CD8-positive, alpha-beta memory T cell (primary cell): ENCODE measurements at regions of chr13 and their contacts with region 1.

Region 1: DNA sequence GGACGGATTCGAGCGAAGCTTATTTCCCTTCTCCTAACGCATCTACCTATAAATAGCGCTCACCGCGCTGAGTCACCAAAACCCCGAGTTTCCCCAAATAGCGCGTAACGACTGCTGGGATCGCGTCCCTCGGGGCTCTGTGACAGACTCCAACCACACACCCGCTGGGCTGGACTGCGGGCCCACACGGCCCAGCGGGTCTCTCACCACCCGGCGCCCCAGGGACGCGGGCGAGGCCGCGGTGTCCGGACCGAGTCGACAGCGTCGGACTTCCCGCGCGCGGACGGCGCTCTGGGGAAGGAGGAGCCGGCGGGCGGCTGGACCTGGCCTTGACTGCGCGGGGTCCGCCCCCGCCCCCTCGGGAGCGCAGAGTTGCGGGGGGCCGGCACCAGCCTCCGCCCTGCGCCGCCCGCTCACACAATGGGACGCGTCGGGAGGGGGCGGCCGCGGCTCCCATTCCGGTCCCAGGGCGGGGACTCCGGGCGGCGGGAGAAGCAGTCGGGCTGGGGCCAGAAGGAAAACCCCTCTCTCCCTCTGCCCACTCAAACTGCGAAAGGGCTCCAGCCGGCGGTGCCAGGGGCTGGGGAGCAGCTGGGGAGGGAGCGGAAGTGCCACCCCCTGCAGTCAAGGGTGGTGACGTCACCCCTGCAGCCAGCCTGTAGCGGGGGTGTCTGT is 108.8 kb downstream of the KCNRG start:
- DNase-seq: peak; percentile 62 to 85 (median 75)
- H3K4me3 ChIP-seq: peak overlapping the region; percentile 77
- H3K4me3 Mint-ChIP-seq: peak overlapping the region; percentile 89 to 94 (median 92)
- H3K27ac ChIP-seq: peak overlapping the region; percentile 95
- H3K27ac Mint-ChIP-seq: peak overlapping the region; percentile 95 to 99 (median 98)
- H3K4me1 ChIP-seq: peaks cover 46% of the 10 kb centered on the region
- H3K4me1 Mint-ChIP-seq: peaks cover 48 to 70% (median 65%) of the 10 kb centered on the region in 3 donors
- H3K27me3 ChIP-seq: peaks cover 7% of the 10 kb centered on the region
- H3K27me3 Mint-ChIP-seq: peaks cover 16 to 20% of the 10 kb centered on the region in 2 donors

Region 2: DNA sequence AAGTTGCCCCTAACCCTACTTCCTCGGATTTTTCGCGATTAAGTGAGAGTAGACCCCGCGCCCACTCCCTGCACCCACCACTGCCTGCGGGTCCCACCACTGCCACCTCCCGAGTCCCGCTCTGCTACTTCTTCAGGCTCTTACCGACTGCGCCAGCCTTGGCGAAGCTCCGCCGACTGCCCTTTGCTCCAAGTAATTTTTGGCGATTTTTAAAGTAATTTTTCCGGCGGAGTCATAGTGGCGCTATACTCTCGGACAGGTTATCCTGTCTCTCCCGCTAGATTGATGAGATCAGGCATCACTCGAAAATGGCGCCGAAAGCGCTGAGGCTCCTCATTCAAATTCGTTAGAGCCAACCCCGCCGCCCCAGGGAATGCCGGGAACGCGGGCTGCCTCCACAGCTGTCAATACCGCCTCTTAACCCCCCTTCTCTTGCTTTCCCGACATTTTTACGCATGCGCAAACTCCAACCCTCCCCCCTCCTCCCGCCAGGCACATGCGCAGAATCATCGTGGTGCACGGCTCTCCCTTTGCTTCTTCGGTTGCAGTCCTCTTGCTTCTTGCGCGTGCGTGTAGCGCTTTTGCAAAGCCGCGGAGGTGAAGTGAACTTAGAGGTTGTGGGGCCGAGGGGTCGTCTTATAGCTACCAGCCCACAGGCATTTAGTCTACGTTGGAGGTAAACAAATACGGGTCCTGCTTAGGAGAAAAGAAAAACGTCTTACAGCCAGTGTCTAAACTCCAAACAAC is 42.1 kb before region 1 on chr13:
- CTCF ChIA-PET with region 1: interaction called, 133 read pairs
- POLR2A ChIA-PET with region 1: interaction called, 139 read pairs
- DNase-seq: peak; percentile 97 to 99 (median 98)
- H3K4me3 ChIP-seq: peak overlapping the region; percentile 97
- H3K4me3 Mint-ChIP-seq: peak overlapping the region; percentile 93 to 100 (median 97)
- H3K27ac ChIP-seq: peak overlapping the region; percentile 78
- H3K27ac Mint-ChIP-seq: peak overlapping the region; percentile 82 to 98 (median 96)
- H3K4me1 ChIP-seq: peaks cover 21% of the 10 kb centered on the region
- H3K4me1 Mint-ChIP-seq: peaks cover 53 to 66% (median 59%) of the 10 kb centered on the region in 3 donors
- H3K27me3 ChIP-seq: no peaks in the 10 kb centered on the region
- H3K27me3 Mint-ChIP-seq: peaks cover 4 to 8% of the 10 kb centered on the region in 2 donors

Region 3: GRCh38 chr13:50236898-50237318 is 112.9 kb after region 1 on chr13:
- CTCF ChIA-PET with region 1: interaction called, 6 read pairs
- POLR2A ChIA-PET with region 1: interaction called, 12 read pairs
- DNase-seq: peak in 3 of 5 donors; percentile 4 to 51 (median 43)
- H3K4me3 ChIP-seq: peak overlapping the region; percentile 33
- H3K4me3 Mint-ChIP-seq: peak overlapping the region; percentile 59 to 91 (median 87)
- H3K27ac ChIP-seq: peak overlapping the region; percentile 39
- H3K27ac Mint-ChIP-seq: peak overlapping the region; percentile 45 to 95 (median 89)
- H3K4me1 ChIP-seq: peaks cover 14% of the 10 kb centered on the region
- H3K4me1 Mint-ChIP-seq: peaks cover 35 to 51% (median 45%) of the 10 kb centered on the region in 3 donors
- H3K27me3 ChIP-seq: no peaks in the 10 kb centered on the region
- H3K27me3 Mint-ChIP-seq: no peaks in the 10 kb centered on the region

Region 4: GRCh38 chr13:50299546-50300249 is 175.7 kb after region 1 on chr13:
- CTCF ChIA-PET with region 1: no interaction called
- POLR2A ChIA-PET with region 1: no interaction called
- DNase-seq: no peak
- H3K4me3 ChIP-seq: no peak overlapping the region
- H3K4me3 Mint-ChIP-seq: no peak overlapping the region
- H3K27ac ChIP-seq: no peak overlapping the region
- H3K27ac Mint-ChIP-seq: no peak overlapping the region
- H3K4me1 ChIP-seq: no peaks in the 10 kb centered on the region
- H3K4me1 Mint-ChIP-seq: peaks cover 32 to 46% (median 37%) of the 10 kb centered on the region in 3 donors
- H3K27me3 ChIP-seq: no peaks in the 10 kb centered on the region
- H3K27me3 Mint-ChIP-seq: peaks cover 0 to 5% of the 10 kb centered on the region in 2 donors

Region 5: GRCh38 chr13:50512474-50513299 is 388.7 kb after region 1 on chr13:
- CTCF ChIA-PET with region 1: no interaction called
- POLR2A ChIA-PET with region 1: interaction called, 12 read pairs
- DNase-seq: peak; percentile 13 to 69 (median 28)
- H3K4me3 ChIP-seq: peak overlapping the region; percentile 52
- H3K4me3 Mint-ChIP-seq: no peak overlapping the region
- H3K27ac ChIP-seq: peak overlapping the region; percentile 40
- H3K27ac Mint-ChIP-seq: no peak overlapping the region
- H3K4me1 ChIP-seq: peaks cover 16% of the 10 kb centered on the region
- H3K4me1 Mint-ChIP-seq: peaks cover 2 to 4% (median 2%) of the 10 kb centered on the region in 3 donors
- H3K27me3 ChIP-seq: no peaks in the 10 kb centered on the region
- H3K27me3 Mint-ChIP-seq: no peaks in the 10 kb centered on the region

Region 6: DNA sequence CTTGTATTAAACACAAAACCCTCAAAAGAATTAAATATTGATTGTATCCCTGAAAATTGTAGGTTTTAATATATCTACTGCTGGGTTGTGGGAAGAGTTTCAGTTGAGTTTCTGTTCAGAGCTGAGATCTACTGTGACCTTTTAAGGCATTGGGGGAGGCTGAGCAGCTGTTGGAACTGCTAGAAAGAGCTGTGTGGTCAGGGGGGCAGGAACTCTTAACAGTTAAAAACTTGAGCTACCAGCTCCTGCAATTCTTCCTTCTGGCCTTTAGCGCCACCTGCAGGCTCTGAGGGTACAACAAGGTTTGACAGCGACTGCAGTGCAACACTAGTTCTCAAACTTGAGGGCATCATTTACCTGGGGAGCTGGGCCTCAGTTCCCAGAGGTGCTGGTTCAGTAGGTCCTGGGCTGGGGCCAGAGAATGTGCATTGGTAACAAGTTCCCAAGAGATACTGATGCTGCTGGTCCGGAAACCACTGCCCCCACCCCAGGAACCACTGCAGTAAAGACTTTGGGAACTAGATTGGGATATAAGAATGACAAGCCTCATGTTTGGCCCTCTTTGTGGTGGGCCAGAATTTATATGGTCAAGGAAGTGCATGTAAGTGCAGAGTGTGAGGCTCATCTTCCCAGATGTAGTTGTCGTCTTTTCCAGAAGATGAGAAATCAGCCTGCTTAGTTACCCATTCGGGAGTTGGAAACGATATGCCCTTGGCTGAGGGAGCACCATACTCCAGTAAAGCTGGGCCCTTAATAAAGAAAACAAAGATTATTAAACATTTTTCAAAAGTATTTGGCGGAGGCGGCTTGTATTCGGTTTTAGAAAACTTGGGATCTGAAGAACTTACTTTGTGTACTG is 788.2 kb after region 1 on chr13:
- CTCF ChIA-PET with region 1: interaction called, 20 read pairs
- POLR2A ChIA-PET with region 1: interaction called, 21 read pairs
- DNase-seq: peak; percentile 81 to 94 (median 83)
- H3K4me3 ChIP-seq: peak overlapping the region; percentile 90
- H3K4me3 Mint-ChIP-seq: peak overlapping the region; percentile 85 to 97 (median 94)
- H3K27ac ChIP-seq: peak overlapping the region; percentile 90
- H3K27ac Mint-ChIP-seq: peak overlapping the region; percentile 67 to 98 (median 92)
- H3K4me1 ChIP-seq: peaks cover 35% of the 10 kb centered on the region
- H3K4me1 Mint-ChIP-seq: peaks cover 53 to 66% (median 62%) of the 10 kb centered on the region in 3 donors
- H3K27me3 ChIP-seq: no peaks in the 10 kb centered on the region
- H3K27me3 Mint-ChIP-seq: no peaks in the 10 kb centered on the region